ENCODE measurements at regions of chr4 and their contacts with region 1.

Region 1: DNA sequence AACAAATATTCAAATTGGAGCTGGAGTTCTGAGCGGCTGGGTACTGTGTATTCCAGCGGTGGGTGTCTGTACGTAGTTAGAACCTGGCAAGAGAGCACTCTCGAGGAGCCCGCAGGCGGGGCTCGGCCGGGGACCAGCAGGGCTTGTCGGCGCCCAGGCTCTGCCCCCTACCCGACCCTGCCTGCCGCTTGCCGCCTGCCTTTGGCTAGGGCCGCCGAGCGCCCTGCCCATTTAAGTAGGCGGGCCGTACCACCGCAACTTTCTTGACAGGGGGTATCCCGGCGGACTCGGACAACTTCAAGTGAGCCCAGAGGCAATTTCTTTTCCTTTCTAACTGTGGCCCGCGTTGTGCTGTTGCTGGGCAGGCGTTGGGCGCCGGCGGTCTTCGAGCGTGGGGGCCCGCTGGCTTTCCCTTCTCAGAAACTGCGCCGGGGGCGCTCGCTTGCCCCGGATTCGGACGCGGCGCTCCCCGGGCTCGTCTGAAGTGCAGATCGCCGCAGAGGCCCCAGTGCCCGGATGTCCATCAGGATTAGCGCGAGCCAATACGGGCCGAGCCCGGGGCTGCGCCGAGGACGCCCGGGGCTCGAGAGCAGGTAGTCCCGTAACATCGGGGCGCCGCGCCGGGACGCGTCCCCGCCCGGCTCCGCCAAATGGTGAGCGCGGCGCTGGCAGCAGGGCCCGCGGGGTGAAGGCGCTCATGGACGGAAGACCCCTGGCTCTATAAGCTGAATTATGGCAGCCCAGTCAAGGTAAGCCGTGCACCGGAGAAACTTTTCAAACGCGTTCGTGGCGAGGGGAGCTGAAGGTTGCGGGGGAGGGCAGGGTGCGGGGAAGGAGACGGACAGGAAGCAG is 72.1 kb downstream of the AFF1 start:
- DNase-seq: peak; percentile 92 to 94
- ATAC-seq: peak; percentile 85

Region 2: DNA sequence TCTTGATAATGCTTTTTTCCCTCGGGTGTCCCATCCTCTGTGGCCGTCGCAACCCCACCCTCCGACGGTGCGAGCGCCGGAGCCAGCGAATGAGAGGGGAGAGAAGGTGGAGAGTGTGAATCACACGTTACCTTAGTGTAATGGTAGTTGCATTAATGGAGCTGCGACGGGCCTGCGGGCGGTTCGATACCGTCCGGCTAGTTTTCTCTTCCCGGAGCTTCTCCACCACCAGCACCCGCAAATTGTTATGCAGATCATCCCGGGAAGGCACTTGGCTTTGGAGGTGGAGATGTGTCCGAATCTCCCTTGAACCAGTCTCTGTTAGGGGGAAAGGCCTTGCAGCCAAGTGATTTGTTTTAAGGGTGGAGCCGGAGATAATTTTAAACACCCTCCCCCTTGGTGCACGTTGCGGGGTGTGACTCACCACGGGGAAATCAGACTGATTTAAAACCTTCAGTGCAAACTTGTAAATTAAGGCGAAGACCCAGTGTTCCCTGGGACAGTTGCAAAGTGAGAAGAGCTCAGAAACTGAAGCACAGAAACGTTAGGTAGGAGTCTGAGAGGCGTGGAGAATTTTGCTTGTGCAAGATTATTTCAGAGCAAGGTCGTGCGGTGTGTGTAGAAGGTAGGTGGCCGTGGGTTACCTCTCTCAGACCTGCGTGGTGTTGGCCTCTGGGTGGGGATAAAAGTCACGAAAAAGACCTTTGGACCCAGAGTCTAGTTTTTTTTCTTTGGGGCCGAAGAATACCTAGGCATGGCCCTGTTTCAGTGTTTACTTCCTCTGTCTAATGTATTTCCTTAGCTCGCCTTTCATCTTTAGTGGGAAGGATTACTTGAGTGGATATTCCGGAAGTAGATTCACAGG is 70.8 kb before region 1 on chr4:
- intact Hi-C with region 1: loop called in 1 of 2 experiments (anchors 2 kb)
- DNase-seq: peak; percentile 75 to 88
- ATAC-seq: peak; percentile 59

Region 3: DNA sequence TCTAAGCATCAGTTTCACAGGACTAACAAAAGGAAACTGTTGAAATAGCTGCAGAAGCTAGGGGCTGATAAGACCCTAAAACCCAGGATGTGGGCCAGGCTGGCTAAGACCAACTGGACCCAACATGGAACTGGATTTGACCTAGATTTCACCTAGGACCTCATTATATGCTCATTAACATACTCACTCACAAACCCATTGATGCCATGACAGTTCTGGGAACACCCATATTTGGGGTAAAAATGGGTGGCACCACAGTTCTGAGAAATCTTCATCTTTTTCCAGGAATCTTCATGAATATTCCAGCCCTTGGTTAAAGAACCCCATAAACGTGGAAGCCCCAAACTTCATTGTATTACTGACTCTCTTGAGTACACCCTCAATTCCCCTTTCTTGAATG is 274.7 kb after region 1 on chr4:
- intact Hi-C with region 1: no loop called
- DNase-seq: no peak
- ATAC-seq: no peak

Measured in left colon (tissue), 2 donors.